ENCODE measurements at regions of chr2 and their contacts with region 1.

Region 1: GRCh38 chr2:100562732-100563720 is at the start of gene PDCL3:
- DNase-seq: peak; percentile 99
- ATAC-seq: peak; percentile 87
- H3K4me3 ChIP-seq: peak within 1 kb of the TSS; percentile 45 to 93 (median 89)
- H3K4me3 Mint-ChIP-seq: peak within 1 kb of the TSS; percentile 100
- H3K27ac ChIP-seq: peak within 1 kb of the TSS; percentile 84
- H3K27ac Mint-ChIP-seq: peak within 1 kb of the TSS; percentile 99
- H3K4me1 ChIP-seq: peaks cover 13 to 17% of the 10 kb centered on the region in 2 donors
- H3K4me1 Mint-ChIP-seq: peaks cover 19% of the 10 kb centered on the region
- H3K27me3 ChIP-seq: no peaks in the 10 kb centered on the region
- H3K27me3 Mint-ChIP-seq: no peaks in the 10 kb centered on the region
- CTCF ChIP-seq: no peak
- total RNA-seq, gene PDCL3: 18.1 and 24.1 TPM in 2 replicates

Region 2: GRCh38 chr2:98608116-98608999 is 1954.7 kb before region 1 on chr2 and contains the starts of genes COA5 and UNC50:
- CTCF ChIA-PET with region 1: no interaction called
- POLR2A ChIA-PET with region 1: no interaction called
- intact Hi-C with region 1: loop called (anchors 5 kb)
- DNase-seq: peak; percentile 94
- ATAC-seq: peak; percentile 92
- H3K4me3 ChIP-seq: peak within 1 kb of the TSS; percentile 88 to 99 (median 97)
- H3K4me3 Mint-ChIP-seq: peak within 1 kb of the TSS; percentile 93
- H3K27ac ChIP-seq: peak within 1 kb of the TSS; percentile 86 to 97
- H3K27ac Mint-ChIP-seq: peak within 1 kb of the TSS; percentile 94
- H3K4me1 ChIP-seq: peaks cover 33 to 35% of the 10 kb centered on the region in 2 donors
- H3K4me1 Mint-ChIP-seq: peaks cover 67% of the 10 kb centered on the region
- H3K27me3 ChIP-seq: no peaks in the 10 kb centered on the region
- H3K27me3 Mint-ChIP-seq: no peaks in the 10 kb centered on the region
- CTCF ChIP-seq: no peak
- total RNA-seq, gene COA5: 46.9 and 48.9 TPM in 2 replicates
- total RNA-seq, gene UNC50: 38.8 and 45.5 TPM in 2 replicates

Region 3: GRCh38 chr2:100252811-100253698 is 310.0 kb before region 1 on chr2:
- CTCF ChIA-PET with region 1: no interaction called
- POLR2A ChIA-PET with region 1: no interaction called
- intact Hi-C with region 1: loop called (anchors 5 kb)
- DNase-seq: no peak
- ATAC-seq: no peak
- H3K4me3 ChIP-seq: no peak overlapping the region
- H3K4me3 Mint-ChIP-seq: no peak overlapping the region
- H3K27ac ChIP-seq: no peak overlapping the region
- H3K27ac Mint-ChIP-seq: no peak overlapping the region
- H3K4me1 ChIP-seq: peaks cover 35% of the 10 kb centered on the region in 2 donors
- H3K4me1 Mint-ChIP-seq: peaks cover 37% of the 10 kb centered on the region
- H3K27me3 ChIP-seq: peaks cover 0 to 5% (median 0%) of the 10 kb centered on the region in 4 experiments
- H3K27me3 Mint-ChIP-seq: peaks cover 8% of the 10 kb centered on the region
- CTCF ChIP-seq: no peak

Region 4: DNA sequence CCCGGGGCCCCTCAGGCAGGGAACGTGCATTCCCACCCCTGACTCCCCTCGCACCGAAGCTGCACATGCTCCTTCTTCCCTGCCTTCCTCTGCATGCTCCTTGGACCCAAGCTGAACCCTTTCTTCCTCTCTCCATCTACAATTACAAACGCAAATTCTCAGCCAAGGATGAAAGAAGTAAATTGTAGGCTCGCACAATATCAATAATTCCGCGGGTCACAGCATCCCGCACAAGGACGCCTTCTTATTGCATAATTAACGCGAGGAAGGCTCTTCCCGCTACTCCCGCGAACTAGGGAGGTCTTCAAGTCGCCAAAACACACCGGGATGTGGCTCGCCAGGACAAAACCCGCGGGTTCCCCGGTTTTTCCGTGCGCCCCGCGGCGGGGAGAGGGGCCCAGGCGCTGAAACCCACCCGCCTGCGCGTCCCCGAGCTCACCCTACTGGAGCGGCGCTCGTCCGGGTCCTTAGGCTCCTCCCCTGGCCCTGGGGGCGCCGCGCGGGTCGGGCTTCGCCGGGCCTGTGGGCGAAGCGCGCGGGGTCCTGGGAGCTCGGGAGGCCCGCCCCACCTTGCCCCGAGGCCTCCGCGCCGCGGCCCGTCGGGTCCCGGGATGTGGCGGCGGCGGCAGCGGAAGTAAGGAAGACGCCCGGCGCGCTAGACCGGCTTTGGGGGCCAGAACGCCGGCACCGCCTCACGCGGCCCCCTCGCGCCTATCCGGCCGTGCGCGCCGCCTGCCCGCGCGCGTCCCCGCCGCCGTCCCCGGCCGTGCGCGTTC is 145.9 kb before region 1 on chr2 and contains the start of gene CHST10:
- CTCF ChIA-PET with region 1: no interaction called
- POLR2A ChIA-PET with region 1: no interaction called
- intact Hi-C with region 1: loop called (anchors 1 kb)
- DNase-seq: peak; percentile 77
- ATAC-seq: peak; percentile 93
- H3K4me3 ChIP-seq: peak within 1 kb of the TSS; percentile 65 to 95 (median 79)
- H3K4me3 Mint-ChIP-seq: peak within 1 kb of the TSS; percentile 93
- H3K27ac ChIP-seq: peak within 1 kb of the TSS in 1 of 2 donors; percentile 60
- H3K27ac Mint-ChIP-seq: peak within 1 kb of the TSS; percentile 54
- H3K4me1 ChIP-seq: peaks cover 11 to 14% of the 10 kb centered on the region in 2 donors
- H3K4me1 Mint-ChIP-seq: peaks cover 22% of the 10 kb centered on the region
- H3K27me3 ChIP-seq: no peaks in the 10 kb centered on the region
- H3K27me3 Mint-ChIP-seq: no peaks in the 10 kb centered on the region
- CTCF ChIP-seq: no peak
- total RNA-seq, gene CHST10: 9.9 and 10.7 TPM in 2 replicates

Region 5: DNA sequence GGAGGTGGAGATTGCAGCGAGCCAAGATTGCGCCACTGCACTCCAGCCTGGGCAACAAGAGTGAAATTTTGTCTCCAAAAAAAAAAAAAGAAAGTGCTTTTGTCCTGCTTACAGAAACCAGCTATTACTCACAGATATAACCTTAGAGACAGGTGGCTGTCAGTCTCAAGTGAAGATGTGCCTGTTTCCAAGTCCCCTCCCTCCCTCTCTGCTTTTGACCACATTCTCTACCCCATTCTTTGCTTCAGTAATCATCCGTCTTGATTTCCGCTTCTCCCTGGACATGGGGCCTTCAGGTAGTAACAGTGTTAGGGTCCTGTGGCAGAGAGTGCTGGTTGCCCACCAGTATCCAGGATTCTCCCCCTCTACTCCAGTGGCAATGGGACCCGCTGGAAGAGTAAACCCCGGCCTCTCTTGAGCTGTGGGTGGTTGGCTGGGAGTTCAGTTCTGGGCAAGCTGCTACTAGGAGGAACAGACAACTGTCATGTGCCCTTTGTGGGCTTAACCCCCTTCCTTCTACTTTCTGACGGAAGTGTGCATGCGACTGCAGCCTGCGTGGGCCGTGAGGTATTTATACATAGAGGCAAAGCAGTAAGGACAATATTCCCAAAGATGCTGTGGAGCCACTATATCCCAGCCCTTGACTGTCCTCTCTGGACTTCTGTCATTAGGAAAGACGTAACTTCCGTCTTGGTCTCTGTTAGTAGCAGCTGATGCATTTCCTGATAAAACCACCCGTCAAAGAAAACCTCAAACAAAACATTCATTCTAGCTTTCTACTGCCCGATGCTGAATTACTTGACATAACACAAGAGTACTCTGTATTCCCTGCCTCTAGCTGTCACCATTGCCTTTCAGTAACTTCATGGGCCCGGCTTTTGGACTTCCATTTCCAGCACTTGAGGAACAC is 17.6 kb after region 1 on chr2:
- CTCF ChIA-PET with region 1: interaction called, 15 read pairs
- POLR2A ChIA-PET with region 1: interaction called, 50 read pairs
- intact Hi-C with region 1: loop called (anchors 1 kb)
- DNase-seq: peak; percentile 87
- ATAC-seq: peak; percentile 78
- H3K4me3 ChIP-seq: peak overlapping the region in 4 of 5 experiments; percentile 0 to 36 (median 20)
- H3K4me3 Mint-ChIP-seq: peak overlapping the region; percentile 78
- H3K27ac ChIP-seq: peak overlapping the region; percentile 91 to 95
- H3K27ac Mint-ChIP-seq: peak overlapping the region; percentile 99
- H3K4me1 ChIP-seq: peaks cover 18 to 20% of the 10 kb centered on the region in 2 donors
- H3K4me1 Mint-ChIP-seq: peaks cover 25% of the 10 kb centered on the region
- H3K27me3 ChIP-seq: no peaks in the 10 kb centered on the region
- H3K27me3 Mint-ChIP-seq: no peaks in the 10 kb centered on the region
- CTCF ChIP-seq: no peak

Region 6: DNA sequence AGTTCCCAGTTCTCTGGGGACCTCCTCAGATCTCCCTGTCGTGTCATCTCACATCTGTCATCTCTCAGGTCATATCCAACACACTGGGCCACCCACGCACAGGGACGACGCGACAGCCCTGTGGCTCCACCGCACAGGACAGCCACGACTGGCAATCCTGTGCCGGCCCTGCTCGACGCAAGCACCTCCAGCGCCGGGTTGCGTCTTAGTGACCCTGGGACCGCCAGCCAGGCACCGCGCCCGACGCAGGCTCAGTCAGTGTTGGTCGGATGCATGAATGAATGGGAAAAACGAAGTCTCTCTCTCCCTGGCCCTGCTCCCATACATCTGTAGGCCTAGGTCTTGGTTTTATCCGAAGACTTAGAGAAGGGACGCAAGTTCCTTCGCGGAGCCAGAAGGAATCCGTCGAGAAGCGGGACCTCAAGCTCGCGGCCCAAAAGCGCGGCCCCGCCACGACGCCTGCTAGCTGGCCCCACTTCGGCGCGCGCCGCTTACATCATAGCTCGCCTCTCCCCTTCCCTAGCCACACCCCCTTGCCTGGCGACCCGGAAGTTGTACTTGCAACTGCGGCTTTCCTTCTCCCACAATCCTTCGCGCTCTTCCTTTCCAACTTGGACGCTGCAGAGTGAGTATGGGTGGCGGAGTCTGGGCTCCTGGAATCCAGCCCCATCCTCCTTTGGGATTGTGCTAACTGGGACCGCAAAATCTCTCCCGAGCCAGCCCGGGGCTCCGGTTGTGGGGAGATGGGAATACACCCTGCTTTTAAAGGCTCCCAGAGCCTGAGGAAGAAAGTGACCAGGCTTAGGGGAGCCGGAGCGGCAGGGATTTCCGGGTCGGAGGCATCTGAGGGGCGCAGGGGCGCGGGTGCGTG is 438.9 kb after region 1 on chr2 and contains the start of gene RPL31:
- CTCF ChIA-PET with region 1: interaction called, 5 read pairs
- POLR2A ChIA-PET with region 1: interaction called, 9 read pairs
- intact Hi-C with region 1: loop called (anchors 1 kb)
- DNase-seq: peak; percentile 95
- ATAC-seq: peak; percentile 97
- H3K4me3 ChIP-seq: peak within 1 kb of the TSS; percentile 80 to 99 (median 92)
- H3K4me3 Mint-ChIP-seq: peak within 1 kb of the TSS; percentile 88
- H3K27ac ChIP-seq: peak within 1 kb of the TSS; percentile 84 to 91
- H3K27ac Mint-ChIP-seq: peak within 1 kb of the TSS; percentile 96
- H3K4me1 ChIP-seq: peaks cover 15 to 21% of the 10 kb centered on the region in 2 donors
- H3K4me1 Mint-ChIP-seq: peaks cover 40% of the 10 kb centered on the region
- H3K27me3 ChIP-seq: no peaks in the 10 kb centered on the region
- H3K27me3 Mint-ChIP-seq: no peaks in the 10 kb centered on the region
- CTCF ChIP-seq: no peak
- total RNA-seq, gene RPL31: 1,595 and 1,767 TPM in 2 replicates

Region 7: DNA sequence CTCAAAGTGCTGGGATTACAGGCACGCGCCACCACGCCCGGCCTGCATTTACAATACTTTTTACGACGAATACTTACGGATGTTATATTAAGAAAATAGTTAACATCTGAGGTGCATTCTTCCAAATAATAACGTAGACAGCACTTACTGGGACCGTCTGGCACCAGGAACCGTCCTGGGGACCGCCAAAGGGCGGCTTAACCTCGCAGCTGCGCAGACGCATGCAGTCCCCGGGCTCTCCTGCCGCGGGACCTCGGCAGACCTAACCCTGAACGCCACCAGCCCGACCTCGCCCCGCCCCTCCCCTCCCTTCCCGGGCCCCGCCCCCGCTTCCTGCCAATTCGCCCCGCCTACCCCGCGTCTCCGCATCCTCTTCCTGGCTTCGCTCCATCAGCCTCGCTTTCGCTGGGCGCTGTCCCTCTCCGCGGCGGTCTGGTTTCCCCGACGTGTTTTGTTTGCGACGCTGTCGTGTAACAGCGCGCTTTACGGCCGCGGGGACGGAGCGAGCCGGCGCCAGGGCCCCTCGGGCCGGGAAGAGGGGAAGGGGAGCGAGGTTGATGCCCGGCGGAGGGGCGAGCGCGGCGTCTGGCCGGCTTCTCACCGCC is 689.5 kb after region 1 on chr2 and contains the start of gene CNOT11:
- CTCF ChIA-PET with region 1: no interaction called
- POLR2A ChIA-PET with region 1: no interaction called
- intact Hi-C with region 1: loop called (anchors 2 kb)
- DNase-seq: peak; percentile 99
- ATAC-seq: peak; percentile 85
- H3K4me3 ChIP-seq: peak within 1 kb of the TSS; percentile 68 to 91 (median 88)
- H3K4me3 Mint-ChIP-seq: peak within 1 kb of the TSS; percentile 95
- H3K27ac ChIP-seq: peak within 1 kb of the TSS; percentile 83 to 98
- H3K27ac Mint-ChIP-seq: peak within 1 kb of the TSS; percentile 92
- H3K4me1 ChIP-seq: peaks cover 20 to 30% of the 10 kb centered on the region in 2 donors
- H3K4me1 Mint-ChIP-seq: peaks cover 44% of the 10 kb centered on the region
- H3K27me3 ChIP-seq: no peaks in the 10 kb centered on the region
- H3K27me3 Mint-ChIP-seq: no peaks in the 10 kb centered on the region
- CTCF ChIP-seq: no peak
- total RNA-seq, gene CNOT11: 46.3 and 46.7 TPM in 2 replicates

Measured in B cell (primary cell).